Activated naive CD4-positive, alpha-beta T cell treated with anti-CD3 and anti-CD28 coated beads for 36 hours (primary cell): ENCODE measurements at regions of chr12 and their contacts with region 1.

Region 1: DNA sequence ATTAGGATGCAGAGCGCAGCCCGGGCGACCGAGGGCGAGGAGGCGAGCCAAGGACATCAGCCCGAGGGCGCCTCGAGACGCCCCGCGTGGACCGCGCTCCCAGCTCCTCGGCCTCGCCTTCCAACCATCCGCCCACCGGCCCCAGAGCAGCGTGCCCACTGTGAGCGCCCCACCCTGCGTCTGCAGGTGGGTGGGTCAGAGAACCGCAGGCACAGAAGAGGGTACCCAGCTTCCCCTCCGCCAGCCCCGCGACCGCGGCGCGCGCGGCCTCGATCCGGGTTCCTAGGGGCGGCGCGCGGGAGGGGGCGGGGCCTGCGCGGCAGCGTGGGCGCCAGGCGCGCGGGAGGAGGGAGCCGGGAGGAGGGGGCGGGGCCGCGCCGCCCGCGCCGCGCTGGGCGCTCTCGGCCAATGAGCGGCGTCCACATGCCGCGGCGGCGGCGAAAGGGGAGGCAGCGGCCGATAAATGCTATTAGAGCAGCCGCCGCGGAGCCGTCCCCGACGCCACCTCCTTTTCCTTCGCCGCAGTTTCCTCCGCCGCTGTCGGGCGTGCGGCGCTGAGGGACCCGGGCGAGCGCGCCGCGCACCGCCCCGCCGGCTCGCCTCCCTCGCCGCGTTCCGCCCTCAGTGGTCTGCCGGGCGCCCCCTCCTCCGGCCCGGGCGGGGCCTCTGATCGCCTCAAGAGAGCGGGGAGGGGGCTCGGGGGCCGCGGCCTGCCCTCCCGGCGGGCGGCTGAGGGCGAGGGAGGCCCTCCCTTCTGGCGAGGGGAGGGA is at the start of gene ATP2A2:
- DNase-seq: peak; percentile 89
- H3K4me3 Mint-ChIP-seq: peak within 1 kb of the TSS; percentile 90
- H3K27ac Mint-ChIP-seq: peak within 1 kb of the TSS; percentile 87
- H3K4me1 Mint-ChIP-seq: peaks cover 43% of the 10 kb centered on the region
- H3K27me3 Mint-ChIP-seq: no peaks in the 10 kb centered on the region
- total RNA-seq, gene ATP2A2: 95.5 to 98.6 TPM

Region 2: GRCh38 chr12:109995686-109996482 is 285.1 kb before region 1 on chr12 and contains the start of gene GIT2:
- CTCF ChIA-PET with region 1: no interaction called
- intact Hi-C with region 1: loop called (anchors 2 kb)
- DNase-seq: peak; percentile 96
- H3K4me3 Mint-ChIP-seq: peak within 1 kb of the TSS; percentile 94
- H3K27ac Mint-ChIP-seq: peak within 1 kb of the TSS; percentile 93
- H3K4me1 Mint-ChIP-seq: peaks cover 54% of the 10 kb centered on the region
- H3K27me3 Mint-ChIP-seq: no peaks in the 10 kb centered on the region
- total RNA-seq, gene GIT2: 40.2 to 41.6 TPM

Region 3: DNA sequence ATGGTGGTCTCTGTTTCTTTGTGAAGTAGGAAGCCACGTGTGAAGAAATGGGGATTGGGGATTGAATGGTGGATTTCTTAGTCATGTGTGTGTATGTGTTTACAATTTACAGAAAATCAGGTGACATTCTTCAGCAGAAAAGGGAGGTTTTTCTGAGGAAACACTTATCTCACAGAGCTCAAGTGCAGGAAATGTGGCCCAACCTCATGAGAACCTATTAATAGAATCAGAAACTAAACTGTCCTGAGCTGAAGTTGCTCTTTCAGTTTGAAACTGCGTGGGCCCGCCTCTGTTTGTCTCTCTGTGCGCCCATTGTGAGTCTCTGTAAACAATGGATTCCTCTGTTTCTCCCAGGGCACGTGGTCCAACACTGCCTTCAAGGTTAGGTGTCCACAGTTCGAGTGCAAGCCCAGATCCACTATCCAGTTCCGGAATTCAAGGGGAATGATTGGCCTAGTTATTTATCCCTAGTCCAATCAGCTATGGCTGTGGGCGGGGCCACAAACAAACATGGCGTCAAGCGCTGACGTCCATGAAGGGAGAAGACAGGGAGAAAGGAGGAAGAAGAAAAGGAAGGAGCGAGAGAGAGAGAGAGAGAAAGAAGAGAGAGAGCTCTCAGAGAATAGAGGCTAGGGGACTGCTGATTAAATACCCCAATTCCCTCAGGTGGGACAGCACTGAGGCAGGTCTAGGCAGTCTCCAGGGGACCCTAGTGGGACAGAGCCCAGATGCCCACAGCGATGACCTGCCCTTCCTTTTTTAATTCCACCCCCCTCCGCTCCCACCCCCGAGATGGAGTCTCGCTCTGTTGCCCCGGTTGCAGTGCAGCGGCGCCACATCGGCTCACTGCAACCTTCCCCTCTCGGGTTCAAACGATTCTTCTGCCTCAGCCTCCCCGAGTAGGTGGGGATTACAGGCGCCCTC is 201.2 kb before region 1 on chr12:
- CTCF ChIA-PET with region 1: no interaction called
- intact Hi-C with region 1: loop called (anchors 1 kb)
- DNase-seq: peak; percentile 79
- H3K4me3 Mint-ChIP-seq: peak overlapping the region; percentile 42
- H3K27ac Mint-ChIP-seq: peak overlapping the region; percentile 89
- H3K4me1 Mint-ChIP-seq: peaks cover 13% of the 10 kb centered on the region
- H3K27me3 Mint-ChIP-seq: no peaks in the 10 kb centered on the region

Region 4: DNA sequence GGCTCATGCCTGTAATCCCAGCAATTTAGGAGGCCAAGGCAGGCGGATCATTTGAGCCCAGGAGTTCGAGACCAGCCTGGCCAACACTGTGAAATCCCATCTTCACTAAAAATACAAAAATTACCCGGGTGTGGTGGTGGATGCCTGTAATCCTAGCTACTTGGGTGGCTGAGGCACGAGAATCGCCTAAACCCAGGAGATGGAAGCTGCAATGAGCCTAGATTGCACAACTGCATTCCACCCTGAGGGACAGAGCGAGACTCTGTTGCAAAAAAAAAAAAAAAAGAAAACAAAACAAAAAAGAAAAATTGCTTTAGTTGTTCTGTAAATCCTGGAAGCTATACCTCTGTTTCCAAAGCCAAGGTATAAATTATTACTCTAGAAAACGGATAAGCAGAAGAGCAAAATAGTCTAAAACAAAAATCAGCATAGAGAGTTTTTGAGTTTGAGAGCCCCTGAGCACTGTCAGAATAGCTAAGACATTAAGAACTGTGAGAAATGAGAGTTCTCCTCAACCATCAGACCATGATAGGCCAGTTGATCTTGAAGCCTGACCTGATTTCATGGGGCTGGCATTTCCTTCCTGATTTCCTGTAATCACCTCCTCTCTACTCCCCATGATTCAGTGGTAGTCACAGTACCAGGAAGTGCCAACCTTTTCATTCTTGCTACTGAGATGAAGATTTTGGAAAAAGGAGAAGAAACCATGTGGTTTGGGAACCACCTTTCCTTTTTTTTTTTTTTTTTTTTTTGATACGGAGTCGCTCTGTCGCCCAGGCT is 31.8 kb after region 1 on chr12:
- CTCF ChIA-PET with region 1: interaction called, 3 read pairs
- intact Hi-C with region 1: loop called (anchors 2 kb)
- DNase-seq: peak; percentile 31
- H3K4me3 Mint-ChIP-seq: no peak overlapping the region
- H3K27ac Mint-ChIP-seq: peak overlapping the region; percentile 63
- H3K4me1 Mint-ChIP-seq: peaks cover 57% of the 10 kb centered on the region
- H3K27me3 Mint-ChIP-seq: no peaks in the 10 kb centered on the region

Region 5: DNA sequence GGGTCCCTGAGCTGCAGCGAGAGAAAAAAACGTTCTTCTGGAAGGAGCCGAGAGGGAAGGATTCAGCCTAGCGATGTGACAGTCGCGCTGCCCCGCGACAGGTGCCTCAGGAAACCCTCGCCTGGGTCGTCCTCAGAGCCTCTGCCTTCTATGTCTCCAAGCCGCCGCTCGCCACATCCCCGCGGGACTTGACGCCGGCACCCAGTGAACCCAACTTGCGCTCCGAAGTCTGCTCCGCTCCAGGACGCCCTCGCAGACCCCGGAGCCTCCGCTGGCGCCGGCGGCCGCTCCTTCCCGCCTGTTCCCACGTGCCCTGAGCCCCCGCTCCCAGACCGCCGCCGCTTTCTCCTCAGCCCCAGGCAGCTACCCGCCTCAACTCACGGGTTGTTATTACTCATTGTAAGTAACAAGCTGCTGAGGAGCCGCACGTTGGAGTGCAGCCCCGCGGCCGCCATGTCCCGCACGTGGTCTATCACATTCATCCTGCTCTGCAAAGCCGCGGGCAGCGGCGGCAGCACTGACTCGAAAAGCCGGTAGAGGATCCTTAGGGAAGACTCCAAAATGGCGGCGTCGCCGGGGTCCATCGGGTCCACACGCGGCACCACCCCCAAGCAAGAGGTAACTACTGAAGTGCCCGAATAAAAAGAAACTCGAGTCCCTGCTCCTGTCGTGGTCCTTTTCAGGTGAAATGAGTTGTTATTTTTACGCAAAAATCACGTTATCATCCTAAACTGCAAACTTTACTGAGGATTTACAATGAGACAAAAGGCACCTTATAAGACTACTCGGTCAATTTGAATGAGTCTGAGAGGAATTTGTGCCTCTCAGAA is 122.4 kb after region 1 on chr12 and contains the start of gene ANAPC7:
- CTCF ChIA-PET with region 1: no interaction called
- intact Hi-C with region 1: loop called (anchors 1 kb)
- DNase-seq: peak; percentile 92
- H3K4me3 Mint-ChIP-seq: peak within 1 kb of the TSS; percentile 98
- H3K27ac Mint-ChIP-seq: peak within 1 kb of the TSS; percentile 99
- H3K4me1 Mint-ChIP-seq: peaks cover 27% of the 10 kb centered on the region
- H3K27me3 Mint-ChIP-seq: no peaks in the 10 kb centered on the region
- total RNA-seq, gene ANAPC7: 51.2 to 61.2 TPM

Region 6: GRCh38 chr12:110583137-110584059 is 302.4 kb after region 1 on chr12 and contains the start of gene PPTC7:
- CTCF ChIA-PET with region 1: no interaction called
- intact Hi-C with region 1: loop called (anchors 5 kb)
- DNase-seq: peak; percentile 99
- H3K4me3 Mint-ChIP-seq: peak within 1 kb of the TSS; percentile 90
- H3K27ac Mint-ChIP-seq: peak within 1 kb of the TSS; percentile 98
- H3K4me1 Mint-ChIP-seq: peaks cover 59% of the 10 kb centered on the region
- H3K27me3 Mint-ChIP-seq: no peaks in the 10 kb centered on the region
- total RNA-seq, gene PPTC7: 41.1 to 43.2 TPM

Region 7: GRCh38 chr12:111056618-111057521 is 775.9 kb after region 1 on chr12:
- CTCF ChIA-PET with region 1: no interaction called
- intact Hi-C with region 1: loop called (anchors 2 kb)
- DNase-seq: peak; percentile 88
- H3K4me3 Mint-ChIP-seq: no peak overlapping the region
- H3K27ac Mint-ChIP-seq: peak overlapping the region; percentile 97
- H3K4me1 Mint-ChIP-seq: peaks cover 28% of the 10 kb centered on the region
- H3K27me3 Mint-ChIP-seq: no peaks in the 10 kb centered on the region